Natural killer cell (primary cell): ENCODE measurements at regions of chr10 and their contacts with region 1.

Region 1: GRCh38 chr10:94232709-94233383 is 129.9 kb downstream of the NOC3L start:
- DNase-seq: no peak
- ATAC-seq: no peak
- H3K4me3 ChIP-seq: no peak overlapping the region
- H3K4me3 Mint-ChIP-seq: no peak overlapping the region
- H3K27ac ChIP-seq: no peak overlapping the region
- H3K27ac Mint-ChIP-seq: no peak overlapping the region
- H3K4me1 ChIP-seq: no peaks in the 10 kb centered on the region
- H3K4me1 Mint-ChIP-seq: no peaks in the 10 kb centered on the region
- H3K27me3 ChIP-seq: no peaks in the 10 kb centered on the region
- H3K27me3 Mint-ChIP-seq: peaks cover 4 to 14% of the 10 kb centered on the region in 2 donors
- CTCF ChIP-seq: no peak

Region 2: DNA sequence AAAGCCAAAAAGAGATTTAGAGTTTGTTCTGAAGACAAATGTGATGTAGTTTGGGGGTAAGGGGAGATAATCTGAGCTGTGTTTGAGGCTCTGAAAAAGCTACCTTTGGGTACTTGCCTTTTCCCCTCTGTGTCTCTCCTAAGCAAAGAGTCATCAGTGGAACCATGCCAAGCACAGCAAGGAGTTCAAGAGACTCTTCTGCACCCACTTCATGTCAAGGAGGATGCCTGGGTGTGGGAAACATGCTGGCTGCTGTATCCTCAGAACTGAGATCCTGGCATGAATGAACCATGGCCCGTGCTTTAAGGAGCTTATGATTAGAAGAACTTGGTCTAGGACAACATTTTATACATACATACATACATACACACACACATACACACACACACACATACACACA is 13.0 kb before region 1 on chr10:
- intact Hi-C with region 1: no loop called
- DNase-seq: no peak
- ATAC-seq: no peak
- H3K4me3 ChIP-seq: no peak overlapping the region
- H3K4me3 Mint-ChIP-seq: no peak overlapping the region
- H3K27ac ChIP-seq: no peak overlapping the region
- H3K27ac Mint-ChIP-seq: no peak overlapping the region
- H3K4me1 ChIP-seq: no peaks in the 10 kb centered on the region
- H3K4me1 Mint-ChIP-seq: no peaks in the 10 kb centered on the region
- H3K27me3 ChIP-seq: no peaks in the 10 kb centered on the region
- H3K27me3 Mint-ChIP-seq: peaks cover 8 to 16% of the 10 kb centered on the region in 2 donors
- CTCF ChIP-seq: no peak

Region 3: DNA sequence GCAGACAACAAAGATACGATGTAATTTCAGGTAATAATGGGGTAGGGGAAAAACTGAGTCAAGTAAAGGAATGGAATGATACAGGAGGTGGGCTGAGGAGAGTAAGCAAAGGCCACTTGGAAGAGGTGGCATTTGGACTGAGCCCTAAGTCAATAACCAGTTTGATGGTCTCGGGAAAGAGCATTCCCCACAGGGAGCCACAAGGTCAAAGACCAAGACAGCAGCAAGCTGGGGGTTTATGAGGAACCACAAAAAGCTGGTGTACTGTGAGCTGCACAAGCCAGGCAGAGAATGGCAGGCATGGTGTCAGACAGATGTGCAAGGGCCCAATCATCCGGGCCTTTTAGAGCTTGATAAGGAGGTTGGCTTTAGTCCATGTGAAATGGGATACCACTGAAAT is 31.2 kb after region 1 on chr10:
- intact Hi-C with region 1: loop called (anchors 1 kb)
- DNase-seq: no peak
- ATAC-seq: no peak
- H3K4me3 ChIP-seq: no peak overlapping the region
- H3K4me3 Mint-ChIP-seq: no peak overlapping the region
- H3K27ac ChIP-seq: no peak overlapping the region
- H3K27ac Mint-ChIP-seq: no peak overlapping the region
- H3K4me1 ChIP-seq: no peaks in the 10 kb centered on the region
- H3K4me1 Mint-ChIP-seq: no peaks in the 10 kb centered on the region
- H3K27me3 ChIP-seq: no peaks in the 10 kb centered on the region
- H3K27me3 Mint-ChIP-seq: peaks cover 0 to 3% of the 10 kb centered on the region in 2 donors
- CTCF ChIP-seq: no peak